Activated naive CD4-positive, alpha-beta T cell treated with anti-CD3 and anti-CD28 coated beads, Interleukin-2, amount 10 ng/mL, durations not matched to agents 7 days and 5 days (primary cell): ENCODE measurements at regions of chr17 and their contacts with region 1.

Region 1: DNA sequence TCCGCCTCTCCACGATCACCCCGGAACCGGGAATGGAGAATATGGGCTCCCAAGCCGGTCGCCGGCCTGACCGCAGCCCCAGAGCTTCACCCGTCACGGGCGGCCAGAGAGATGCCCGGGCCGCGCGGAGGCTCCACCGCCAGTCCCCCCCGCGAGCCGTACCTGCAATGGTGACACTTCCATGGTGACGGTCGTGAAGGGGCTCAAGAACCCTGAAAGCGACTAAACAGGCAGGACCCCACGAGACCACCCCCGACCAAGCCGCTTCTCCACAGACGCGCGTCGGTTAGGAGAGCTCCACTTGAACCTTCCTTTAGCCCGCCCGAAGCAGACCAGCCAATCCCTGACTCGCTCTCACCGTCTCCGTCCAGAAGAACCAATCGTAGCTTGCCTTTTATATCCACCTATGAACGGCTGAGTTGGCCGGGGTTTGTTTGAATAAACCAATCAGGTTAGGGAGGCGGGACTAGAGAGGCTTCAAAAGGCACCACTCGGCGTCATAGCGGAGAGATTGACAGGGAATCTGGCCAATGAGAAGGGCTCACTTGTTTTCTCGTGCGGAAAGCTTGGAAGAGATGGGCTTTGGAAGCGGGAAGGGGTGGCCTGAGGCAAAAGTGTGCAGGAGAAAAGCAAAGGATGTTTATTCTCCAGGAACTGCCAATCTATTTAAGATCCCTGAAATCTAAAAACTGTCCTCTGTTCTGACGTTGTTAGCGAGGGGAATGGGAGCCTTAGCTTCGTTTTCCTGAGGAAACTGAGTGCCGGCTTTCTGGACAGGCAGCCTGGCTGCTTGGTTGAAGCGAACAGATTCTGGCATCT is at the start of gene TOP2A:
- DNase-seq: peak; percentile 97
- H3K4me3 Mint-ChIP-seq: peak within 1 kb of the TSS; percentile 90
- H3K27ac Mint-ChIP-seq: peak within 1 kb of the TSS; percentile 92
- H3K4me1 Mint-ChIP-seq: peaks cover 51% of the 10 kb centered on the region
- H3K27me3 Mint-ChIP-seq: peaks cover 3% of the 10 kb centered on the region

Region 2: DNA sequence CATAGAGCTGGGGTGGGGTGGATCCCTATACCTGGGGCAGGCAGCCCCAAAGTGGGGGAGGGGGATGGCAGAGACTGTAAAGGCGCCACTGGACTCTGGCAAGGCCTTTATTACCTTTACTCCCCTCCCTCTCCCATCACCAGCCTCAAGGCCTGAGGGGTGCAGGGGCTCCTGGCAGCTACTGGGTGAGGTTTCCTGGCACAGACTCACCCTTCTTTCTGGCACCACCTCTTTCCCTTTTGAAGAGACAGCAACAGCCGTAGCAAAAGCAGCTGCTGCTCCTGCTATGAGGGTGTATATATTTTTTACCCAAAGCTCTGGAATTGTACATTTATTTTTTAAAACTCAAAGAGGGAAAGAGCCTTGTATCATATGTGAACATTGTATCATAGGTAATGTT is 223.0 kb before region 1 on chr17:
- CTCF ChIA-PET with region 1: no interaction called
- DNase-seq: no peak
- H3K4me3 Mint-ChIP-seq: no peak overlapping the region
- H3K27ac Mint-ChIP-seq: peak overlapping the region; percentile 55
- H3K4me1 Mint-ChIP-seq: peaks cover 29% of the 10 kb centered on the region
- H3K27me3 Mint-ChIP-seq: peaks cover 36% of the 10 kb centered on the region

Region 3: DNA sequence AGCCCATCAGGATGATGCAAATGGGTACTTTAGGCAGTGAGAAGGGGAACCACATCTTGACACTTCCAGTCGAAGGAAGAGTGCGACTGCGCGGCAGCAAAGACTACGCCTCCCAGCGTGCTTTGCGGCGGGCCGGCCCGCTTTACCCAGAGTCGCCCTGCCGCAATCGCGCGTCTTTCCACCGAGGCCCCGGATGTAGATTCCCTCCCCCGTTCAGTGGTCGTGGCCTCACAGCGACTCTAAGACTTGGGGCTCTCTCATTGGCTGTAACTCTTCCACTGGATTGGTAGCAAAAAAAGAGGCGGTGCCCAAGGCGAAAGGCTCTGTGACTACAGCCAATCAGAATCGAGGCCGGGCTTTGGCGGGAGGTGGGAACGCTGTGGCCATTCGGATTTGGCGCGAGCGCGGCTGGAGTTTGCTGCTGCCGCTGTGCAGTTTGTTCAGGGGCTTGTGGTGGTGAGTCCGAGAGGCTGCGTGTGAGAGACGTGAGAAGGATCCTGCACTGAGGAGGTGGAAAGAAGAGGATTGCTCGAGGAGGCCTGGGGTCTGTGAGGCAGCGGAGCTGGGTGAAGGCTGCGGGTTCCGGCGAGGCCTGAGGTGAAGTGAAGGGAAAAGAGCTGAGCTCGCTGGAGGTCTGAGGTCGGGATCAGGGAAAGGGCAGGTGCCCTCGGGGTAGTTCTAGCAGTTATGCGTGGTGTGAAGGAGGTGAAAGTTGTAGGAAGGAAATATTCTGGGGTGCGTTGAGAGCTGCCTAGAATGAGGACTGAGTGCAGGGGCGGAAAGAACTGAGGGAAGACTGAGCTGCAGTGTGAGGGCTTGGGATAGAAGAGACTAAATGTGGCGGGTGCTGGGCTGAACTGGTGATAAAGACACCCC is 130.1 kb before region 1 on chr17 and contains the start of gene CDC6:
- CTCF ChIA-PET with region 1: no interaction called
- DNase-seq: peak; percentile 99
- H3K4me3 Mint-ChIP-seq: peak within 1 kb of the TSS; percentile 100
- H3K27ac Mint-ChIP-seq: peak within 1 kb of the TSS; percentile 98
- H3K4me1 Mint-ChIP-seq: peaks cover 53% of the 10 kb centered on the region
- H3K27me3 Mint-ChIP-seq: peaks cover 3% of the 10 kb centered on the region

Region 4: GRCh38 chr17:40387680-40388079 is 30.1 kb before region 1 on chr17:
- CTCF ChIA-PET with region 1: interaction called, 10 read pairs
- DNase-seq: no peak
- H3K4me3 Mint-ChIP-seq: no peak overlapping the region
- H3K27ac Mint-ChIP-seq: no peak overlapping the region
- H3K4me1 Mint-ChIP-seq: no peaks in the 10 kb centered on the region
- H3K27me3 Mint-ChIP-seq: no peaks in the 10 kb centered on the region

Region 5: DNA sequence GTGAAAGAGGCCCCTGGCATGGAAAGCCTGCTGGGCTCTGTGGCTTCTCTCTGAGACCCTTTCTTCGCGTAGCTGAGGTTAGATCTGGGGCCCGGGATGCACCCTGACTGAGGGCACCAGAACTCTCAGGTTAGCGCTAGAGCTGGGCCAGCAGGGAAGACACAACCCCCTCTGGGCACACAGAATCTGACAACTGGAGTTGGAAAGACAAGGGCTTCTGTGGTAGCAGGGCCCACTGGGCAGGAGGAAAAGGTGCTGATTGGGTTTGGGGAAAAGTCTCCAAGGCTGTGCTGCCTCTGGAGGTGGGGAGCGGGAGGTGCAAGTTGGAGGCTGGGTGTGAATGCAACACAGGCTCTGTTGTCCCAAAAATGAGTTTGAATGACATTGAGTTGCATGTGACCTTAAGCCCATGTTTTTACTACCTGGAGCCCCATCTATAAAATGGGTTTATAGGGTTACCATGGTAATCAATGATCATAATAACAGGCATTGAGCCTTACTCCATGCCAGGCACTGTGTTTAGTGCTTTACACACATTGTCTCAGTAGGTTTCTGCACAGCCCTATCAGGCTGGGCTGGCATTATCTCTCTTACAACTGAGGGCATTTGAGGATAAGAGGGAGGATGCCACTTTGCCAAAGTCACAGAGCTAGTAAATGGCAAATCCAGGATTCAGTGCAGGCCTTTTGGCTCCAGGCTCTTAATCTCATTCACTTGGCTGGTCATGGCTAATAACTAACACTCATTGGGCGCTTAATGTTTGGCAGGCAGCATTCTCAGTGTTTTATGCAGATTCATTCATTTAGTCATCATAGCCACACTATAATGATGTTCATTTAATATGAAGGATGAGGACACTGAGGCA is 16.0 kb after region 1 on chr17:
- CTCF ChIA-PET with region 1: interaction called, 18 read pairs
- DNase-seq: peak; percentile 57
- H3K4me3 Mint-ChIP-seq: no peak overlapping the region
- H3K27ac Mint-ChIP-seq: no peak overlapping the region
- H3K4me1 Mint-ChIP-seq: peaks cover 17% of the 10 kb centered on the region
- H3K27me3 Mint-ChIP-seq: peaks cover 66% of the 10 kb centered on the region

Region 6: DNA sequence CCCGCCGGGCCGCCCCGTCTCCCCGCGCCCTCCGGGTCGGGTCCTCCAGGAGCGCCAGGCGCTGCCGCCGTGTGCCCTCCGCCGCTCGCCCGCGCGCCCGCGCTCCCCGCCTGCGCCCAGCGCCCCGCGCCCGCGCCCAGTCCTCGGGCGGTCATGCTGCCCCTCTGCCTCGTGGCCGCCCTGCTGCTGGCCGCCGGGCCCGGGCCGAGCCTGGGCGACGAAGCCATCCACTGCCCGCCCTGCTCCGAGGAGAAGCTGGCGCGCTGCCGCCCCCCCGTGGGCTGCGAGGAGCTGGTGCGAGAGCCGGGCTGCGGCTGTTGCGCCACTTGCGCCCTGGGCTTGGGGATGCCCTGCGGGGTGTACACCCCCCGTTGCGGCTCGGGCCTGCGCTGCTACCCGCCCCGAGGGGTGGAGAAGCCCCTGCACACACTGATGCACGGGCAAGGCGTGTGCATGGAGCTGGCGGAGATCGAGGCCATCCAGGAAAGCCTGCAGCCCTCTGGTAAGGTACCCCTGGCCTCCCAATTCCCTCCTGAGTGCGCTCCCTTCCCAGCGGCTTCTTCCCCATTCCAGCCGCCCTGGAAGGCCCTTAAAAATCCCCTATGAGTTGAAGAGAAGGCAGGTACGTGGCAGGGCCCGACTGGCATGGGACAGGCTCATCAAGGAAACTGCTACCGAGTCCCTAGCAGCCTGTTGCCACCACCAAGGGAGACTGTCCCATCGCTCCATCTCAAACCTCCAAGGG is 25.9 kb after region 1 on chr17:
- CTCF ChIA-PET with region 1: interaction called, 30 read pairs
- DNase-seq: peak; percentile 81
- H3K4me3 Mint-ChIP-seq: peak overlapping the region; percentile 82
- H3K27ac Mint-ChIP-seq: peak overlapping the region; percentile 92
- H3K4me1 Mint-ChIP-seq: peaks cover 59% of the 10 kb centered on the region
- H3K27me3 Mint-ChIP-seq: peaks cover 38% of the 10 kb centered on the region